Prostate gland (tissue), 2 donors: ENCODE measurements at regions of chr6 and their contacts with region 1.

Region 1: GRCh38 chr6:27871924-27872638 is 40.1 kb downstream of the OR2B2 start:
- DNase-seq: peak; percentile 80
- H3K4me3 ChIP-seq: peak overlapping the region; percentile 29 to 37
- H3K27ac ChIP-seq: peak overlapping the region; percentile 46 to 64
- H3K4me1 ChIP-seq: peaks cover 2% of the 10 kb centered on the region
- H3K27me3 ChIP-seq: peaks cover 13% of the 10 kb centered on the region
- CTCF ChIP-seq: no peak
- POLR2A ChIP-seq: peak; percentile 90

Region 2: GRCh38 chr6:27518881-27519795 is 352.9 kb before region 1 on chr6:
- intact Hi-C with region 1: no loop called
- DNase-seq: peak; percentile 56
- H3K4me3 ChIP-seq: peak overlapping the region; percentile 55 to 78
- H3K27ac ChIP-seq: peak overlapping the region; percentile 85 to 95
- H3K4me1 ChIP-seq: no peaks in the 10 kb centered on the region
- H3K27me3 ChIP-seq: no peaks in the 10 kb centered on the region
- CTCF ChIP-seq: peak; percentile 39 to 69 (median 55)
- POLR2A ChIP-seq: no peak

Region 3: GRCh38 chr6:27838058-27838944 is 33.8 kb before region 1 on chr6:
- intact Hi-C with region 1: loop called (anchors 5 kb)
- DNase-seq: peak; percentile 91
- H3K4me3 ChIP-seq: peak overlapping the region; percentile 57 to 69
- H3K27ac ChIP-seq: peak overlapping the region; percentile 94 to 97
- H3K4me1 ChIP-seq: peaks cover 13% of the 10 kb centered on the region
- H3K27me3 ChIP-seq: no peaks in the 10 kb centered on the region
- CTCF ChIP-seq: peak in 2 of 4 experiments; percentile 24 to 78
- POLR2A ChIP-seq: peak; percentile 90